Activated naive CD4-positive, alpha-beta T cell treated with anti-CD3 and anti-CD28 coated beads for 36 hours (primary cell): ENCODE measurements at regions of chr20 and their contacts with region 1.

Region 1: GRCh38 chr20:47713878-47714450 is 71.3 kb downstream of the SULF2 start:
- DNase-seq: no peak
- H3K4me3 Mint-ChIP-seq: no peak overlapping the region
- H3K27ac Mint-ChIP-seq: no peak overlapping the region
- H3K4me1 Mint-ChIP-seq: no peaks in the 10 kb centered on the region
- H3K27me3 Mint-ChIP-seq: peaks cover 6% of the 10 kb centered on the region

Region 2: DNA sequence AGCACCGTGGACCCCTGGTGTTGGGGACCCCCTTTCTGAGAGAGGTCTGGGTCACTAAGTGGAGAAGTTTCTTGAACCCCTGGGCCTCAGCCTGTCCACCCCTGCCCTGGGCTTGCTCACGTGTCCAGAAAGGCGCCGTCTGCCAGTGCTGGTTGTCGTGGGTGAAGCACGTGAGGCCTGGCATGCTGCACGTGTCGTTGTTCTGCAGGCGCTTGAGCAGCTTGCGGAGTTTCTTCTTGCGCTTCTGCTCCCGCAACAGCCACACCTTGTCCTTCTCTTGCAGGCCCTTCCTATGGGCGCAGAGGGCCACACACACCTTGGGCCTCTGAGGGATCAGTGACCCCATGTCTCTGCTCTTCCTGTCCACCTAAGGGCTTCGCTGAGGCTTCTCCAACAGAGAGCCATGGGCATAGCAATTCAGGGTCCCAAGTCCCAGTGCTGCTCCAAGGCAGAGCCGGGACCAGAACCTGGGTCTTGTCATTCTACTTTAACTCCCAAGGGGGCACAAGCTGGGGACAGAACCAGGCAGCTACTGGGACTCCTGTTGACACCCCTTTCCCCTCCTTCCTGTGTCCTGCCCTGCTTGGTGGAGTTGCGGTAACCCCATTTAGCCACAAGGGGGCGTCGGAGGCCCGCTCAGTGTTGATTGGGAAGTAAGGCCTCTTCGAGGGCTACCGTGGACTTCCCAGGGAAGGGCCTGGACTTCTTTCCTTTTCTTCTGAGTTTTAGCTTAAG is 50.5 kb before region 1 on chr20:
- CTCF ChIA-PET with region 1: interaction called, 4 read pairs
- intact Hi-C with region 1: loop called (anchors 1 kb)
- DNase-seq: peak; percentile 88
- H3K4me3 Mint-ChIP-seq: no peak overlapping the region
- H3K27ac Mint-ChIP-seq: no peak overlapping the region
- H3K4me1 Mint-ChIP-seq: no peaks in the 10 kb centered on the region
- H3K27me3 Mint-ChIP-seq: no peaks in the 10 kb centered on the region

Region 3: GRCh38 chr20:47677635-47678453 is 36.1 kb before region 1 on chr20:
- CTCF ChIA-PET with region 1: interaction called, 6 read pairs
- intact Hi-C with region 1: loop called (anchors 1 kb)
- DNase-seq: peak; percentile 71
- H3K4me3 Mint-ChIP-seq: no peak overlapping the region
- H3K27ac Mint-ChIP-seq: no peak overlapping the region
- H3K4me1 Mint-ChIP-seq: no peaks in the 10 kb centered on the region
- H3K27me3 Mint-ChIP-seq: no peaks in the 10 kb centered on the region

Region 4: GRCh38 chr20:47686545-47686944 is 27.4 kb before region 1 on chr20:
- CTCF ChIA-PET with region 1: interaction called, 10 read pairs
- intact Hi-C with region 1: no loop called
- DNase-seq: no peak
- H3K4me3 Mint-ChIP-seq: no peak overlapping the region
- H3K27ac Mint-ChIP-seq: no peak overlapping the region
- H3K4me1 Mint-ChIP-seq: no peaks in the 10 kb centered on the region
- H3K27me3 Mint-ChIP-seq: no peaks in the 10 kb centered on the region